K562 (cell line): ENCODE measurements at regions of chr10 and their contacts with region 1.

Region 1: DNA sequence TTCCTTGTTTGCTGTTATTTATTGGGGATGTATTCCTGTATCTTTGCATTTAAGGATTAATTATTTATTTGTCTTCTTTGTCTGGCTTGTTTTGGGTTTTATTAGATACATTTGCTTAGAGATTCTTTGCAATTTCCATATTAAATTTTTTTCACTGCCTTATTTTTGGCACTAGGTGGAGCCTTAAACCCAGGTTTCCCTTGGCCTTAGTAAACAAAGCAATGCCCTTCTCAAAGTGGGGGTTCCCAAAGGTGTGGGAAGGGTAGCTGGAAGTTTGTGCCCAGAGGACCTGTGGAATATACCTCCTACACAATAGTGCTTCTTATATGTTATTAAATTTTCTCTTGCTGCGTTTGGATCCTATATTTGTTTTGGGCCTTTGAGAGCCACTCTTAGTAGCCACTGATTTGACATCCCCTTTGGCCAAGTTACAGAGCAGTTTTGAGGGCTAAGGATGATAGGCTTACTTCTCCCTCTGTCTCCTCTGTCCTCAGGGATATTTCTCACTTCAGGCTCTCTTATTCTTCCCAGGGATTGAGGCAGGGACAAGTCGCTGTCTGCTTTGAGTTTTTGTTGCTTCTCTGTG is 162.3 kb downstream of the ITGB1 start:
- DNase-seq: peak; percentile 15 to 37 (median 22)
- ATAC-seq: peak; percentile 72
- H3K4me3 ChIP-seq: no peak overlapping the region
- H3K27ac ChIP-seq: no peak overlapping the region
- H3K4me1 ChIP-seq: no peaks in the 10 kb centered on the region
- H3K27me3 ChIP-seq: no peaks in the 10 kb centered on the region
- CTCF ChIP-seq: peak; percentile 59 to 84 (median 64); a peak in 5 of 6 replicates
- EP300 ChIP-seq: no peak
- POLR2A ChIP-seq: no peak
- RAD21 ChIP-seq: peak; percentile 96 to 97

Region 2: DNA sequence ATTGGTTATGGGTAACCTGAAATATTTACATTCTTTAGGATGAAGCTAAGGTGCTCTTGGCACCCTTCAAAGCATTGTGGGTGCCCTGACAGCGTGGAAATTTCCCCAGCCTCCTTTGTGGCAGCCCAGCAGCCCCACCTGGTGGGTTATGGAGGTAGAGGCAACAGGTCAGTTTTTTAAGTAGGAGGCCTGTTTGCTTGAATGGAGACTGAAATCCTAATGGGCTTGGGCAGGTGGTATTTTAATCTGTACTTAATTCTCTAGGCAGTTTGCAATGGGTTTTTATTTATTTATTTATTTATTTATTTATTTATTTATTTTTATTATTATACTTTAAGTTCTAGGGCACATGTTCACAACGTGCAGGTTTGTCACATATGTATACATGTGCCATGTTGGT is 588.1 kb before region 1 on chr10:
- CTCF ChIA-PET with region 1: no interaction called
- POLR2A ChIA-PET with region 1: no interaction called
- in situ Hi-C with region 1: no loop called
- intact Hi-C with region 1: no loop called
- DNase-seq: peak; percentile 52 to 65 (median 61)
- ATAC-seq: peak; percentile 90
- H3K4me3 ChIP-seq: no peak overlapping the region
- H3K27ac ChIP-seq: no peak overlapping the region
- H3K4me1 ChIP-seq: no peaks in the 10 kb centered on the region; a peak in 1 of 5 replicates
- H3K27me3 ChIP-seq: no peaks in the 10 kb centered on the region
- CTCF ChIP-seq: peak; percentile 79 to 89 (median 86)
- EP300 ChIP-seq: no peak
- POLR2A ChIP-seq: no peak
- RAD21 ChIP-seq: peak; percentile 77 to 87

Region 3: DNA sequence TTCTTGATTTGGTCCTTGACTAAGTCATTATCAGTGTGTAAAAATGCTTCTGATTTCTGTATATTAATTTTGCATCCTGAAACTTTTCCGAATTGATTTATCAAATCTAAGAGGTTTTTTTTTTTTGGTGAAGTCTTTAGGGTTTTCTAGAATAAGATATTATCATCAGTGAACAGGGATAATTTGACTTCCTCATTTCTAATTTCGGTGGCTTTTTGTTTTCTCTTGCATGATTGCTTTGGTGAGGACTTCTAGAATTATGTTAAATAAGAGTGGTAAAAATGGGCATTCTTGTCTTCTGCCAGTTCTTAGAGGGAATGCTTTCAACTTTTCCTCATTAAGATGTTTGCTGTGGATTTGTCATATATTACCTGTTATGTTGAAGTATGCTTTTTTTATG is 179.3 kb before region 1 on chr10:
- CTCF ChIA-PET with region 1: no interaction called
- POLR2A ChIA-PET with region 1: no interaction called
- in situ Hi-C with region 1: no loop called
- intact Hi-C with region 1: no loop called
- DNase-seq: no peak
- ATAC-seq: no peak
- H3K4me3 ChIP-seq: no peak overlapping the region
- H3K27ac ChIP-seq: no peak overlapping the region
- H3K4me1 ChIP-seq: no peaks in the 10 kb centered on the region
- H3K27me3 ChIP-seq: no peaks in the 10 kb centered on the region
- CTCF ChIP-seq: no peak
- EP300 ChIP-seq: no peak
- POLR2A ChIP-seq: no peak
- RAD21 ChIP-seq: no peak

Region 4: GRCh38 chr10:32692174-32692573 is 103.5 kb before region 1 on chr10:
- CTCF ChIA-PET with region 1: no interaction called
- POLR2A ChIA-PET with region 1: no interaction called
- in situ Hi-C with region 1: no loop called
- intact Hi-C with region 1: no loop called
- DNase-seq: no peak
- ATAC-seq: no peak
- H3K4me3 ChIP-seq: no peak overlapping the region
- H3K27ac ChIP-seq: no peak overlapping the region
- H3K4me1 ChIP-seq: no peaks in the 10 kb centered on the region
- H3K27me3 ChIP-seq: no peaks in the 10 kb centered on the region
- CTCF ChIP-seq: no peak
- EP300 ChIP-seq: no peak
- POLR2A ChIP-seq: no peak
- RAD21 ChIP-seq: no peak

Region 5: GRCh38 chr10:33008499-33009243 is 213.0 kb after region 1 on chr10:
- CTCF ChIA-PET with region 1: interaction called, 52 read pairs
- POLR2A ChIA-PET with region 1: no interaction called
- in situ Hi-C with region 1: loop called (anchors 5 kb)
- intact Hi-C with region 1: loop called (anchors 1 kb)
- DNase-seq: peak; percentile 59 to 80 (median 64)
- ATAC-seq: peak; percentile 75
- H3K4me3 ChIP-seq: no peak overlapping the region
- H3K27ac ChIP-seq: no peak overlapping the region
- H3K4me1 ChIP-seq: peaks cover 3 to 6% of the 10 kb centered on the region in 2 experiments; a peak in 3 of 5 replicates
- H3K27me3 ChIP-seq: peaks cover 0 to 3% of the 10 kb centered on the region in 2 experiments; a peak in 1 of 5 replicates
- CTCF ChIP-seq: peak; percentile 87 to 98 (median 94)
- EP300 ChIP-seq: no peak
- POLR2A ChIP-seq: no peak
- RAD21 ChIP-seq: peak; percentile 99 to 100

Region 6: DNA sequence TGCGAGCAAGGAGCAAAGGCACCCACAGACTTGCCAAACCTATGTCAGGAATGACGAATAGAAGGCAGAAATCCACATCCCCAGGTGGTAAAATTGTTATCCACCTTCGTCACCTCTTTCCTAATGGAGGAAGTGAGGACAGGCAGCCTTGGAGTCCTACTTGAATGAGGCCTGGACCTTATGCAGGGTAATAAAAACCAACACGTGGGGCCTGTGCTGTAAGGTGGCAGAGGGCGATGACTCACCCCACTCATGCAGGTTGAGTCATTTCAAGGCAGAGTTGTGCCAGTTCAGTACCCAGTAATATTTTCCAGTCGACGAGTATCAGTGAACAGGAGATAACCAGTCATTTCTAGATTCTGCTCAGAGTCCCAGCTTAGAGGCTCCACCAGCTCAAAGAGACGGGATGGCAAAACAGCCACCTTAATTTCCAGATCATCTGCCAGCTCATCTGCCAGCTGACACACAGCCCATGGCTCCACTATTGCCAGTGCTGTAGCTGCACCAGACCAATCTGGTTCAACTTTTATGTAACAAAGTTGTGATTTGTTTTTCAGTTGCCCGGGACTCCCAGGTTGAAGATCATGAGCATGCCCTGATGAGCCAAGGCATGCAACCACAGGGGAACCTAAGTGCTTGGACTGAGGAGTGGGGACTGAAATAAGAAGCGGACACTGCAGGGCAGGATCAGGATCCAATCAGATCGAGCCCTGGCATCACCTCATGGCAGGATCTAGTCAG is 338.5 kb after region 1 on chr10:
- CTCF ChIA-PET with region 1: no interaction called
- POLR2A ChIA-PET with region 1: no interaction called
- in situ Hi-C with region 1: no loop called
- intact Hi-C with region 1: loop called (anchors 5 kb)
- DNase-seq: no peak
- ATAC-seq: no peak
- H3K4me3 ChIP-seq: no peak overlapping the region
- H3K27ac ChIP-seq: no peak overlapping the region
- H3K4me1 ChIP-seq: no peaks in the 10 kb centered on the region
- H3K27me3 ChIP-seq: peaks cover 4 to 25% of the 10 kb centered on the region in 2 experiments; a peak in 3 of 5 replicates
- CTCF ChIP-seq: no peak
- EP300 ChIP-seq: no peak
- POLR2A ChIP-seq: no peak
- RAD21 ChIP-seq: no peak

Region 7: GRCh38 chr10:33155720-33156638 is 360.3 kb after region 1 on chr10:
- CTCF ChIA-PET with region 1: no interaction called
- POLR2A ChIA-PET with region 1: no interaction called
- in situ Hi-C with region 1: no loop called
- intact Hi-C with region 1: loop called (anchors 1 kb)
- DNase-seq: peak; percentile 15 to 41 (median 22)
- ATAC-seq: peak; percentile 78; the same call in 2 of the 3 replicates
- H3K4me3 ChIP-seq: no peak overlapping the region
- H3K27ac ChIP-seq: no peak overlapping the region
- H3K4me1 ChIP-seq: no peaks in the 10 kb centered on the region
- H3K27me3 ChIP-seq: peaks cover 2 to 6% of the 10 kb centered on the region in 2 experiments; a peak in 1 of 5 replicates
- CTCF ChIP-seq: peak; percentile 45 to 65 (median 52); a peak in 4 of 6 replicates
- EP300 ChIP-seq: no peak
- POLR2A ChIP-seq: no peak
- RAD21 ChIP-seq: peak; percentile 31 to 51